HAP-1 (cell line): ENCODE measurements at regions of chr9 and their contacts with region 1.

Region 1: DNA sequence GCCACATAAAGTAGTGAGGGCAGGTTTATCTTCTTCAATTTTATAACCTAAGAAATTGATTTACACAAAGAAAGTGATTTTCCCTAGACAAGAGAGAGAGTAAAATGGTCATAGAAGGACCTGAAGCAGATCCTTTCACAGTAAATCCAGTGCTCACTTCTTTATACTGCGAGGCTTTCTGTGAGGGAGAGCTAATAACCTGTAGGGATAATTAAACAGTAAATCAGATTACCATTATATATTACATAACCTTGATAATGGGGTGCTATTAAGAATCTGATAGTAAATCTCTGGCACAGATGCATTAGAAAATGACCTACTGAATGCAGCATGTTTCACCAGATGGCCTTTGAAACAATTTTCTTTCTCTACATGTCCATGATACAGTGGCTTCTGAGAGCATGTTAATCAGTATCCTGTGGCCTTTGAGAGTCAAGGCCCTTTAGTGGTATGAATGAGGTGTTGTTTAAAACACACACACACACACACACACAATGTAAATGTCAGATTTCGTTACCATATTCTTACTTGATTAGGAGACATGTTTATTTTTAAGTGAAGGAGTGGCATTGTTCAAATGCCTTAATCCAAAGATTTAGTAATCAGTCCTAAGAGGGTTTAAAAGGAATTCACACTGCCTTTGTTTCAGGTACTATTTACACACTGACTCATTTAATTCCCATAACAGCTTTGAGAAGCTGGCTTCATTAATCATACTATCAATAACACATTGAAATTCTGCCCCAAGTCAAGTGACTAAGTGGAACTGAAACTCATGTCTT is 124.7 kb downstream of the ALDH1A1 start:
- DNase-seq: peak; percentile 28 to 92
- H3K4me3 ChIP-seq: no peak overlapping the region
- H3K4me1 ChIP-seq: peaks cover 32% of the 10 kb centered on the region
- H3K27me3 ChIP-seq: no peaks in the 10 kb centered on the region

Region 2: DNA sequence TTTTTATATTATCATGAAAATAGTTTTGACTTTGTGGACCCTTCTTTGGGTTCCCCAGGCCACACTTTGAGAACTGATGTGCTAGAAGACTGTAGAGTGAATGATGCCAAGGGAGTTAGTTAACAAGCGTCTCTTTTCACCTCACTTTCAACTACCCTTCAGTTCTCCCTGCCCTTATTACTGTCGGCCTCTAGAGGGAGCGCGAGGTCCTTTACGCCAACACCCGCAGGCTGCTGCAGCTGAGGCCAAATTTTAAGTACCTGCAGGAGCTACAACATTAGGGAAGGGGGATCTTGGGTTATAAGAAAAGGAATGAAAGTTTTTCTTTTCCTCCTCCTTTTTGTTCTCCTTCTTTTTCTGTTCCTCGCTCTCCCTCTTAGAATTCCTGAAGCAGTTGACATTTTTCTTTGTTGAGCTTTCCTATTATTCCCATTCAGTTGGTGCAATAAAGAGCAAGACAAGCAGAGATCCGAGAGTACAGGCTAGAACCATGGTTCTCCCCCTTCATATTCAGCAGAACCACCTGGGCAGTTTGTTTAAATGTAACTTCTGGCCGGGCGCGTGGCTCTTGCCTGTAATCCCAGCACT is 547.1 kb before region 1 on chr9:
- in situ Hi-C with region 1: loop called (anchors 5 kb)
- DNase-seq: peak; percentile 80 to 85
- H3K4me3 ChIP-seq: no peak overlapping the region
- H3K4me1 ChIP-seq: peaks cover 3% of the 10 kb centered on the region; the same call in 1 of the 2 replicates
- H3K27me3 ChIP-seq: no peaks in the 10 kb centered on the region

Region 3: DNA sequence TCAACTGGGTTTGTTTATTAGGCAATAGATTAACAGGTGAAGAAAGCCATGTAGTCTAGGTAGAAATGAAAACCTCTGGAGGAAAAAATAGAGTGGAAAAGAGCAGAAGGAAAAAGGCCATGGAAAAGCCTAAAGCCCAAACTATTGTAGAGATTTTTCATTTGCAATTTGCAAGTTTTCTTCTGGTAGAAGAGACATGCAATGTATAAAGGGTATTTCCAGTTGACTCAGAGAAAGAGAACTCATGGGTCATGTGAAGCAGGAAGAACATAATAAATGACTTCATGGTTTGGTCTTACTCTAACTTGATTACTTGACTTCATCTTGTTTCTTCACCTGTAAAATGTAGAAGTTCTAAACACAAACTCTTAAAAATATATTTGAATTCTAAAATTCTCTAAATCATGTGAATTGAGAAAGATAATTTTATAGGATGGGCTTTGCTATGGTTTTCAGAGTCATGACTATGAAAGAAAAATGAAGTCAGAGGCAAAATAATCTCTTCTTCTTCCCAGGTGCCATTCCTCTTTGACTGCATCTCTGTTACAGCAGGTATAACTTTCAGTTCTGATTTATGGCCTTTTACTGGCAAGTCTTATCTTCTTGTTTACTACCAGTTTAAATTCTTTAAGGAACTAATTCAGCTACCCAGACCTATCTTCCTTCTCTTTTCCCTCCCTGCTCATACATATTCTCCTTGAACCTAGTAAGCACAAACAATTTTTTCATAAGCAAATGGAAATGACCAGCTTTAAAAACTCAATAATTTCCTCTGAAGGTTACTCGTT is 354.5 kb before region 1 on chr9:
- in situ Hi-C with region 1: no loop called
- DNase-seq: no peak
- H3K4me3 ChIP-seq: no peak overlapping the region
- H3K4me1 ChIP-seq: peaks cover 17% of the 10 kb centered on the region
- H3K27me3 ChIP-seq: no peaks in the 10 kb centered on the region

Region 4: GRCh38 chr9:73714294-73714693 is 886.2 kb after region 1 on chr9:
- in situ Hi-C with region 1: no loop called
- DNase-seq: no peak
- H3K4me3 ChIP-seq: no peak overlapping the region
- H3K4me1 ChIP-seq: no peaks in the 10 kb centered on the region
- H3K27me3 ChIP-seq: no peaks in the 10 kb centered on the region